Activated T-helper 1 cell treated with anti-CD3 and anti-CD28 coated beads, Interleukin-12 subunit alpha, Interleukin-12 subunit beta, Interleukin-2, Interleukin-4 antibody, amounts not matched to agents 30 ng/mL and 10 ng/mL and 1 ng/mL, durations not matched to agents 14 hours and 24 hours and 36 hours (primary cell): ENCODE measurements at regions of chr10 and their contacts with region 1.

Region 1: DNA sequence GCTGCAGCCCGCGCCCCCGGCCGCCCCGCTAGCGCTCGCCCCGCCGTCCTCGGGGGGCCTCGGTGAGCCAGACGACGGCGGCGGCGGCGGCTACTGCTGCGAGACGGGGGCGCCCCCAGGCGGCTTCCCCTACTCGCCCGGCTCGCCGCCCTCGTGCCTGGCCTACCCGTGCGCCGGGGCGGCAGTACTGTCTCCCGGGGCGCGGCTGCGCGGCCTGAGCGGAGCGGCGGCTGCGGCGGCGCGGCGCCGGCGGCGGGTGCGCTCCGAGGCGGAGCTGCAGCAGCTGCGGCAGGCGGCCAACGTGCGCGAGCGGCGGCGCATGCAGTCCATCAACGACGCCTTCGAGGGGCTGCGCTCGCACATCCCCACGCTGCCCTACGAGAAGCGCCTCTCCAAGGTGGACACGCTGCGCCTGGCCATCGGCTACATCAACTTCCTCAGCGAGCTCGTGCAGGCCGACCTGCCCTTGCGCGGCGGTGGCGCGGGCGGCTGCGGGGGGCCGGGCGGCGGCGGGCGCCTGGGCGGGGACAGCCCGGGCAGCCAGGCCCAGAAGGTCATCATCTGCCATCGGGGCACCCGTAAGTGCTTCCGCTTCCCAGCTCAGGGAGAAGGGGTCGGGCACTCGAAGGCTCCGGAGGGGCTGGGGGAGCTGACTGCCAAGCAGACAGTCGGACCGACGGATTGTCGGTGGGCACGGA is 774 bp downstream of the PTF1A start:
- DNase-seq: no peak
- H3K4me3 Mint-ChIP-seq: no peak overlapping the region
- H3K27ac Mint-ChIP-seq: no peak overlapping the region
- H3K4me1 Mint-ChIP-seq: no peaks in the 10 kb centered on the region
- H3K27me3 Mint-ChIP-seq: peaks cover 68% of the 10 kb centered on the region

Region 2: DNA sequence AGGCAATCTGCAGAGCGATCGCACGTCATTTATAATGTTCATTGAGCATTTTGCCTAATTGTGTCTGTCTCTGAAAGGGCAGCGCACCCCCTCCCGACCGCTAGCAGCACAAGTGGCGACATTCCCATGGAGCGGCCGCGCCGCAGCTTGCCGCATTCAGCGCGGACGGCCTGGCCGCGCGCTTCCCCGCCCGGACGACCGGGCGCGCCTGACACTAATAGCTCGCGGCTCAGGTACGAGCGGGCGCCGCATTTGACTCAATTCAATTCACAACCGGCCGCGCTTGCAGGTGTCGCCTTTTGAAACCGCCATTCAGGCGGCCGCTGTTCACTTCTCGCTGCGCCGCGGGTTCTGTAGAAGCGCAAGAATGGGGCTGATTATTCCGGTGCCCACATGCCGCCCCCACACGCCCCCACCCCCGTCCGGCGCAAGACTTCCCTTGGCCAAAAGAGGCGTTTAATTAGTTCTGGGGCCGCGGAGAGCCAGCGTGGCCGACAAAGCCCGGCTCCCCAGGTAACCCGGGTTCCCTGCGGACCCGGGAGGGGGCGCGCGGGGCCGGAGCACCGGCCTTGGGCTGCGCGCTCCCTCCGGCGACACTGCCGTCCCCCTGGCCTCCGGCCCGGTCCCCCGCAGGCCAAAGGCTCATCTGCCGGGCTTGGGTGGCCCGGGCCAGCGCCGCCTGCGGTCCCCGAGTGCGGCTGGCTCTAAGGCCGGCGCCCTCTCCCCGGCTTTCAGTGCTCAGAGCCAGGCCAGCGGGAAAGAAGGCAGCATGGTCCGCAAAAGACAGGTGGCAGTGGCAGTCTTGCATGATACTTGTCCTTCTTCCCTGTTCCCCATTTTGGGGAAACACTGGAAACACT is 19.4 kb before region 1 on chr10:
- intact Hi-C with region 1: loop called (anchors 1 kb)
- DNase-seq: no peak
- H3K4me3 Mint-ChIP-seq: no peak overlapping the region
- H3K27ac Mint-ChIP-seq: no peak overlapping the region
- H3K4me1 Mint-ChIP-seq: no peaks in the 10 kb centered on the region
- H3K27me3 Mint-ChIP-seq: peaks cover 61% of the 10 kb centered on the region

Region 3: GRCh38 chr10:23270531-23270930 is 77.6 kb after region 1 on chr10:
- intact Hi-C with region 1: no loop called
- DNase-seq: no peak
- H3K4me3 Mint-ChIP-seq: no peak overlapping the region
- H3K27ac Mint-ChIP-seq: no peak overlapping the region
- H3K4me1 Mint-ChIP-seq: no peaks in the 10 kb centered on the region
- H3K27me3 Mint-ChIP-seq: no peaks in the 10 kb centered on the region

Region 4: DNA sequence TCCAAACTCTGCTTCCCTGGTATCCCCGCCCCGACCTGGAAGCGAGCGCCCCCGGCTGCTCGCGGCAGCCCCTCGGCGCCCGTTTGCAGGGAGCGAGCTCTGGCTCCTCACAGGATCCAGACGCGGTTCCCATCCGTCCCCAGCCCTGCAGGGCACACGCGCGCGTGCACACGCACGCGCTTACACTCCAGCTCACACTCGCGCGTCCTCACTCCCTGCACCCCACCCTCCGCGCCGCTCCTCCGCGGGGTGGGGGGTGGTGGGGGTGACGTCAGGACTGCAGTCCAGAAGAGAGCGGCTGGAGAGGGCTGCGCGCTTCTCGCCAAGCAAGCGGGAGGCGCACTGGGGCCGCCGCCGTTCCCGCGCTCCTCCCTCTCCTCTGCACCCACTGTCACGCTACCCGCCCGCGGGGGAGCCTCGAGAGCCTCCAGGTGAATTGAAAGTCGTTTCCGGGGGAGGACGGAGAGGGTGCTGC is 501.6 kb after region 1 on chr10:
- intact Hi-C with region 1: loop called (anchors 10 kb)
- DNase-seq: no peak
- H3K4me3 Mint-ChIP-seq: no peak overlapping the region
- H3K27ac Mint-ChIP-seq: no peak overlapping the region
- H3K4me1 Mint-ChIP-seq: no peaks in the 10 kb centered on the region
- H3K27me3 Mint-ChIP-seq: peaks cover 50% of the 10 kb centered on the region

Region 5: GRCh38 chr10:24068741-24069140 is 875.9 kb after region 1 on chr10:
- intact Hi-C with region 1: no loop called
- DNase-seq: no peak
- H3K4me3 Mint-ChIP-seq: no peak overlapping the region
- H3K27ac Mint-ChIP-seq: no peak overlapping the region
- H3K4me1 Mint-ChIP-seq: no peaks in the 10 kb centered on the region
- H3K27me3 Mint-ChIP-seq: no peaks in the 10 kb centered on the region